ENCODE measurements at regions of chr3 and their contacts with region 1.

Region 1: DNA sequence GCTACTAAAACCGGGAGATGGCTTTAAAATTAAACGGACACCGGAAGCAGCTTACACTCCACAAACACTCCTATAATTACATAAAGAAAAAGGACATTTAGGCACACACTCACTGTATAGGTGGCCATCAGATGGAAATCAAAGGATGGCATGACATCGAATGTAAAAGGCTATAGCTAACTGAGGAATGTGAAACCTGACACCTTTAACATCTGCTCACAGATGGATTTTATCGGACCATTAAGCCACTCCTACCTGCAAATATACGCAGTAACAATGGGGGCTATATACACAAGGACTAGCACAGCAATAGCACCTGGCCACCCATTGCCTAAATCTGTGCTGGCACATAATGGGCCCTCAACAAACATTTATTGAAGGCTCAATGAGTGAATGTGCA is 14.5 kb upstream of the RBSN start:
- DNase-seq: no peak
- CTCF ChIP-seq: no peak

Region 2: DNA sequence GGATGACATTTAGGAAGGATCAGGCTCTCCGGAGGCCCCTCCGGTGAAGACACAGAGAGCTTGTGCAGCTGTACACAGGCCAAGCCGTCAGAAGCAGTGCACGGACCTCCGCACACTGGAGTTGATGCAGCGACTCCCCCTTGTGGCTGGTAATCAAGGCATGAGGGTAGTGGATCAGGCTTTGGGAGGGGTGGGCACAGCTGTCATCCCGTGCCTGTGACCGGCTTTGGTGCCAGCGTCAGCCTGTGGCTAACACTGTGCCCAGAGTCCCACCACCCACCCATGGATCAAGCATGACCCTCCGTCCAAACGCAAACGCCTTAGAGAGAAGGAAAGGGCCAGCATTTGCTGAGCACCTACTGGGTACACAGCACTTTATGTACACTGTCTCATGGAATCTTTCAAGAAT is 565.1 kb before region 1 on chr3:
- in situ Hi-C with region 1: no loop called
- DNase-seq: peak; percentile 78
- CTCF ChIP-seq: peak; percentile 62

Region 3: DNA sequence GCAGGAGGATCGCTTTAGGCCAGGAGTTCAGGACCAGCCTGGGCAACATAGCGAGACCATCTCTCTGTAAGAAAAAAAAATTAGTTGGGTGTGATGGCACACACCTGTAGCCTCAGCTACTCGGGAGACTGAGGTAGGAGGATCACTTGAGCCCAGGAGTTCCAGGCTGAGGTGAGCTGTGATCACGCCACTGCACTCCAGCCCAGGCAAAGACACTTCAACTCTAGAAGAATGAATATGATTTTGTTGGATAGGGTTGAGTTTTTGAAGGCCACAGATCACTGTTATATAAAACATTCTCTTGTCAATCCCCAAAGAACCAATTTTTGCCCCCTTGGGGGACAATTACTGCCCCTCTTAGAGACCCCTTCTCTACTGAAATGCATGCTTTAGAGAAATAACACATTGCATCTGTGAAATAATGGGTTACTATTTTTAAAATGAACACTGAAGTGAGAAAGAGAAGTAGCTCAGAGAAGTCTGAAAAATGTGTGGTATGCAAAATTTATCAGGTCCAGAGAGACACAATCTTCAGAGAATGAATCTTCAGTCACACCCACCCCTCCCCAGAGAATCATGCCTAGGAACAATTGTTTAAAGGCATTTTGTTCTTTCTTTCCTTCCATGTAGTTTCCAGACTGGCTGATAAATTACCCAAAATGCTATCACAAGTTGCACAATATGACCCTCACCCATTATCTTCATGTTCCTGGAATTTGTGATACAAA is 271.2 kb after region 1 on chr3:
- in situ Hi-C with region 1: loop called (anchors 10 kb)
- DNase-seq: peak; percentile 57
- CTCF ChIP-seq: no peak

Measured in GM13976 (cell line).